Activated T-helper 2 cell treated with anti-CD3 and anti-CD28 coated beads, Interferon-gamma antibody, Interleukin-2, Interleukin-4, amounts not matched to agents 10 μg/mL and 5 μg/mL and 100 μg/mL, durations not matched to agents 14 hours and 24 hours and 36 hours (primary cell): ENCODE measurements at regions of chr16 and their contacts with region 1.

Region 1: GRCh38 chr16:84952335-84953189 is 58.8 kb downstream of the ZDHHC7 start:
- DNase-seq: peak; percentile 59
- H3K4me3 Mint-ChIP-seq: no peak overlapping the region
- H3K27ac Mint-ChIP-seq: no peak overlapping the region
- H3K4me1 Mint-ChIP-seq: no peaks in the 10 kb centered on the region
- H3K27me3 Mint-ChIP-seq: no peaks in the 10 kb centered on the region

Region 2: GRCh38 chr16:84754353-84754856 is 198.2 kb before region 1 on chr16:
- intact Hi-C with region 1: loop called (anchors 1 kb)
- DNase-seq: peak; percentile 68
- H3K4me3 Mint-ChIP-seq: no peak overlapping the region
- H3K27ac Mint-ChIP-seq: no peak overlapping the region
- H3K4me1 Mint-ChIP-seq: peaks cover 62% of the 10 kb centered on the region
- H3K27me3 Mint-ChIP-seq: no peaks in the 10 kb centered on the region

Region 3: DNA sequence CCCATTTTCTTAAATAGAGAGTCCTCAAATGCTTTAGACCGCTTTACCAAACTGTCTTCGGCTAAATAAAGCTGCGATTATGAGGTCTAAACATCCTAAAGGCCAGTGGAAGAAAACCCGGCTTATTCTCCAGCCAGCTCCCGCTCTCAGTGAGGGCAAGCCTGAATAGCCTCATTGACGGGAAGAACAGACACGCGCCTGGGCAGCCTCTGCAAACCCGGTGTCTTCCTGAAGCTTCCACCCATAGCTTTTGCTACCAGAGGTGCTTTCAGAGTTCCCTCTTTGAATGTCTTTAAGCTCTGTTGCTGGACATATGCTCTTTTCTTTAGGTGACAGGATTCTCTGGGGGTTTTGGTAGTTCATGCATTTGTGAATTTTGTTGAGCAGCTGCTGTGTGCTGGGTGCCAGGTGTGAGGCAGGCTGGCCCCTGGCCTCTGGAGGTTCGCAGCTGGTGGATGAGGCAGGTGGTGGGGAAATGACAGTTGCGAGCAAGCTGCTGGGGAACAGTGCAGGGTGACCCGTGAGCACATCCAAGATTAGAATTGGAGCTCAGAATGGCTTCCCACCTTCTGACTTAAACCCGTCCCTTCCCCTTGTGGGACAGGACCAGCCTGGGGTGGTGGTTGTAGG is 88.1 kb before region 1 on chr16:
- intact Hi-C with region 1: no loop called
- DNase-seq: no peak
- H3K4me3 Mint-ChIP-seq: no peak overlapping the region
- H3K27ac Mint-ChIP-seq: no peak overlapping the region
- H3K4me1 Mint-ChIP-seq: no peaks in the 10 kb centered on the region
- H3K27me3 Mint-ChIP-seq: no peaks in the 10 kb centered on the region

Region 4: DNA sequence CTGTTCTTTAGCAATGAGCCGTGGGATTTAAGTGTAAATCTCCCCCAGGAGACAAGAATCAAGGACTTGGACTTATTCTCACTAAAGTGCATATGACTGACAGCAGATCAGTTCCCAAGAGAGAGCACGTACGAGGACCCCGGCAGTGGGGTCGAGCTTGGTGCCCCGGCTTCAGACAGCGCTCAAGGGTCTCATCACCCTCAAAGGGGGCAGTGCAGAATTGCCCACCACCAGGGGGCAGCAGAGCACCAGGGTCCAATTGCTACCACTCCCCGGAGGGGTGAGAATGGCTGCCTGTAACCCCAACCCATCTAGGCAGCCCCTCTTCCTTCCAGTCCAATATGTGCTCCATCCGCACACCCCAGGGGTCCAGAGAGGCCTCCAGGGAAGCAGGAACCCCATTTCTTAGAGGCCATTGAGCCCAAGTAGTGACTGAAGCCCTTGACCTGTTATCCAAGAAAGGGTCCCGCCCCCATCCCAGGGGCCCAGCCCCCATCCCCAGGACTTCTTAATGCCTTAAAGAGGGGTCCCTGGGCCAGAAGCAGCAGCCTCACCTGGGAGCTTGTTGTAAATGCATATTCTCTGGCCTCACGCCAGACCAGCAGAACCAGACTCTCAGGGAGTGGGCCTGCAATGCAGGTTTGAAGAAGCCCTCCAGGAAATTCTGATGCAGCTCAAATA is 27.3 kb before region 1 on chr16:
- intact Hi-C with region 1: loop called (anchors 2 kb)
- DNase-seq: peak; percentile 36
- H3K4me3 Mint-ChIP-seq: no peak overlapping the region
- H3K27ac Mint-ChIP-seq: no peak overlapping the region
- H3K4me1 Mint-ChIP-seq: no peaks in the 10 kb centered on the region
- H3K27me3 Mint-ChIP-seq: no peaks in the 10 kb centered on the region